HEK293 (cell line): ENCODE measurements at regions of chr7 and their contacts with region 1.

Region 1: DNA sequence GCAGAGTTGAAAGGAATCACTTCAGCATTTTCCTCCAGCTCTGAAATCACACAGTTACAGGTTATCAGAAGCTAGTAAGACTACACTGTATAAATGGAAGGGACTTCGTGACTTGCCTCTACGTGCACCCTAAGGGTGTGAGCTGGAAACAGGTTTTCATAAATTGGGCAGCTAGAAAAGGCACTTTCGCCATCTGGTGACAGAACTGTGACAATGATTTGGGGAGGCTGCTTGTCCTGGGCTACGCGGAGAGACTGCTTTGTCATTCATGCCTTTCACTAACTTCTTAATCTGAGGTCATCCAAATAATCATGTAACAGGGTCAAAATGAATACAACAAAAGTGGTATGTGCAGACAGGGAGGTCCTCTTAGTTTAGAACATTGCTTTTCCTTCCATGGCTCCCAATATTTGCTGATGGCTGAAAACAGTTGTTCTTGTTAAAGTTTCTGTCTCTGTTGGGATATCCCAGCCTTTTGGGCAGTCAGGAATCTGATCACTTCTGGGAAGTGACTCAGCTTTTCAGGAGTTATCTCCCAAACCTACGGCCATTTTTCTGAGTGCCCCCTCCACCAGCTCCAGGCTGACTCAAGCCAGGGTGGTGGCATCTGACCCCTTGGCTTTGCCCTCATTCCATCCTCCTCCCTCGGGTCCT is 17.8 kb downstream of the VWC2 start:
- H3K4me3 ChIP-seq: no peak overlapping the region
- H3K27ac ChIP-seq: no peak overlapping the region
- H3K4me1 ChIP-seq: no peaks in the 10 kb centered on the region
- CTCF ChIP-seq: no peak

Region 2: DNA sequence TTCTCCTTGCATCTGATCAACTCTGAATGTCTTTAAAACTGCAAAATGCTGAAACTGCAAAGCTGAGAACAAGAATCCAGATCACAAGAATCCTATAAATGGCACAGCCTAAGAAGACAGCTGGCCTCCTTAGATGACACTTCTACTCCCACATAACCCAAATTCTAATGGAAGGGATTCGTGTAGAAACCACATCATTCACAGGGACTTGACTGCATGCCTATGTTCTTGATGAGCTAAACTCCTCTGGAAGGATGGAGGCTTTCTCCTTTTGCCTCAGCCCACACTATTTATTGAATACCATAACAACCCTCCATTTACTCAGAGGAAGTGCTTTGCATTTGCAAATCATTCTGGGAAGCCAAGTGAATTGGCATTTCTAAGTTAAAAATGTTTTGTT is 270.3 kb before region 1 on chr7:
- CTCF ChIA-PET with region 1: no interaction called
- POLR2A ChIA-PET with region 1: no interaction called
- H3K4me3 ChIP-seq: no peak overlapping the region
- H3K27ac ChIP-seq: no peak overlapping the region
- H3K4me1 ChIP-seq: no peaks in the 10 kb centered on the region
- CTCF ChIP-seq: no peak

Region 3: DNA sequence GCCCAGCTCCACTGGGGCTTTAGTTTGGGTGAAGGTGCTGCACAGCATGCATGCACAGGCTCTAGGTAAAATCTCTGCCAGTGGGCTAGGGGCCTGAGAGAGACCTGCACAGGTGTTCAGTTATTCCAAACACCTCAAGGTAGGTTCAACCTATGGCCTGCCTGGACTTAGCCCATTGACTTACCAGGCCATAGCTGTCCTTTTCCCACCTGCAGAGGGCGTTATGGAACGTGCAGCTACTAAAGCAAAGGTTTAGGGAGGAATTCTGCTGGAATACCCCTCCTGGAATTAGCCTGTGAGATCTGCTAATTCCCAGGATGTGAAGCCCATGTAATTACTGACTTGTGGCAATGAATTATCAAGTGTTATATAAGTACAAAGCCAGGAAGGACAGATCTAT is 14.2 kb before region 1 on chr7:
- CTCF ChIA-PET with region 1: interaction called, 12 read pairs
- POLR2A ChIA-PET with region 1: no interaction called
- H3K4me3 ChIP-seq: no peak overlapping the region
- H3K27ac ChIP-seq: no peak overlapping the region
- H3K4me1 ChIP-seq: no peaks in the 10 kb centered on the region; the same call in 1 of the 2 replicates
- CTCF ChIP-seq: no peak